Activated CD4-positive, alpha-beta T cell treated with anti-CD3 and anti-CD28 coated beads for 36 hours (primary cell): ENCODE measurements at regions of chr11 and their contacts with region 1.

Region 1: DNA sequence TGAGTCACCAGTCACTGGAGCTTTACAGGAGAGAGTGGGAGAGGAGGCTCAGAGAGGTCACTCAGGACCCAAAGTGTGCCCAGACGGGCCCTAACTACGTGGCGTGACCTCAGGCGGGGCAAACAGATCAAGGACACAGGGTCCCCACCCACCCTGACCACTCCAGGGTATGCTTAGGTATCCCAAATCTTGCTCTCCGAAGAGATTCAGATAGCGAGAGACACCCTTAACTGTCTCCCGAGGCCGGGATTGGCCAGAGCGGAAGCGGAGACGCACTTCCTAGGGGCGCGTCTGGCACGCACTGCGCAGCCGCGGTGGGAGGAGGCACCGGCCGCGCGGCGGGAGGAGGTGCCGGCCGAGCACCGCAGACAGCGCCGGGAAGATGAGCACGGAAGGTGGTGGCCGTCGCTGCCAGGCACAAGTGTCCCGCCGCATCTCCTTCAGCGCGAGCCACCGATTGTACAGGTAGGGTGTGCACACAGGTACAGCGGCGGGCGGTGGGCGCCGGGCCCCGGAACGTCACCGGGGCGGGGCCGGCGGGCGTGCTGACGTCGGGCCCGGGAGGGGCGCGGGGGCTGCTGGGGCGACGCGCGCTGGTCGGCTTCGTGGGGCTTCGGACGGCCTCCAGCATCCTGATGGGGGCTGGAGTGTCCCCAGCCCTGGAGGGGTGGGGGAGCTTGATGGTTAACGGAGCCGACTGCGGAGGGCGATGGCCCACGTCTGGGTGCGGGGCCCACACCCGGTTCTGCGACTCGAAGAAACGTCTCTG is at the start of gene PTS:
- DNase-seq: peak; percentile 90
- ATAC-seq: peak; percentile 97
- H3K4me3 Mint-ChIP-seq: peak within 1 kb of the TSS; percentile 78
- H3K27ac Mint-ChIP-seq: peak within 1 kb of the TSS; percentile 94
- H3K4me1 Mint-ChIP-seq: peaks cover 19% of the 10 kb centered on the region
- H3K27me3 Mint-ChIP-seq: no peaks in the 10 kb centered on the region
- total RNA-seq, gene PTS: 17.4 to 23.8 TPM

Region 2: DNA sequence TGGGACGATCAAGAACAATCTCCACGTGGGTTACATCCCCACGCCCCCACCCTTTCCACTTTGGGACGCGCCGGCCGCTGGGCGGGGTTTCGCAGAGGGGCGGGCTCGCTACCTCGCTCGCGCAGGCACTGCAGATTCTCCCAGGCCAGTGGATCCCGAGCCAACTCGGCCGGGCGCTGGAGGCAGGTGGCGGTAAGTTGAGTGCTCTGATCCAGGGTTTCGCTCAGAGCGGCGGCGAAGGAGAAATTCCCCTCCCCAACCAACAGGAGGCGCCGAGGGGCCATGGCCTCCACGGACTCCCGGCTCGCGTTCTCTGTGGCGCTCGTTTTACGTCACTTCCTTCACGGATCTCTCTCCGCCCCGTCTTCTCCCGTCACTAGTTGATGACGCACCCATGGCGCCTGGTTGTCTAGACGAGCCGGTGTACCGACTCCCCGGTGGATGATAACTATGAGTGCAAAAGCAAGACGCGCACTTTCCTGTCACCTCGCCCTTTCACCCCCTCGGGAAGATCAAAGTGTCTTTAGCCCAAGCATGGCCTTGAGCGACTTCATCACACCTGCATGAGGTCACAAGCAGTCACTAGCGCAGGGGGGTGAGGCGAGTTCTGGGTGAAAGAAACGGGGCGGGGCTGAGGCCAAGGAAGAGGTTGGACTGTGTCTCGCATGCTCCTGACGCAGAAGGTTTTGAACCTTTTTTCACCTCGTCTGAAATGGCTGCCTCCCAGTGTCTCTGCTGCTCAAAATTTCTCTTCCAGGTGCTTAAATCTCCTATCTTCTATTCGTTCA is 347.2 kb before region 1 on chr11 and contains the starts of genes CFAP68 and FDXACB1:
- CTCF ChIA-PET with region 1: interaction called, 3 read pairs
- POLR2A ChIA-PET with region 1: no interaction called
- intact Hi-C with region 1: loop called in 1 of 2 experiments (anchors 1 kb)
- DNase-seq: peak; percentile 97
- ATAC-seq: peak; percentile 92
- H3K4me3 Mint-ChIP-seq: peak within 1 kb of the TSS; percentile 78
- H3K27ac Mint-ChIP-seq: peak within 1 kb of the TSS; percentile 96
- H3K4me1 Mint-ChIP-seq: peaks cover 26% of the 10 kb centered on the region
- H3K27me3 Mint-ChIP-seq: no peaks in the 10 kb centered on the region
- total RNA-seq, gene CFAP68: 32.1 to 49.7 TPM
- total RNA-seq, gene FDXACB1: 5.9 to 6.0 TPM

Region 3: DNA sequence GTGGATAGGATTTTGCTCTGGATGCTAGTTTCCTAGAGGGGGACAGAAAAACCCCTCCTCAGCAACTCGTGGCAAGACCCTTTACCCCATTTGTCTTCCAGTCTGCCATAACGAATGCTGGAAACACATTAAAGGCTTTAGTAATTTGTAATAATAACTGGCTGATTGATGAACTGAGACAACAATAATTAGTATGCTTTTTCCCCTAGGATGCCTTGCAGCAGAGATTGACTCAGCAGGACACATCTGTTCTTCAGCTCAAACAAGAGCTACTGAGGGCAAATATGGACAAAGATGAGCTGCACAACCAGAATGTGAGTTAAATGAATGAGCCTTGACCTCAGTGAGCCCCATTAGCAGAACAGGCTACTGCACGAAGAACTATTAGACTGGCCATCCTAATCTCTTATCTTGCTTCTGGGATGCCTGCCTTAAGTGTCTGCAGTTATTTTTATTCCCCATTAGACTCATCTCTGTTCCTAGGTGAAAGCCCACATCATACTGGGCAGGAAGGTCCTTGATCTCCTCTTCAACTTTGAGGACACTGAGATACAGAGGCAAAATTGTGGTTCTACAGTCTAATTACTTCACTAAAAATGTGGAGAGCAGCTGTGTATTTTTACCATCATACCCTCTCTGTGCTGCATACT is 233.9 kb before region 1 on chr11:
- CTCF ChIA-PET with region 1: no interaction called
- POLR2A ChIA-PET with region 1: no interaction called
- intact Hi-C with region 1: no loop called
- DNase-seq: no peak
- ATAC-seq: no peak
- H3K4me3 Mint-ChIP-seq: no peak overlapping the region
- H3K27ac Mint-ChIP-seq: no peak overlapping the region
- H3K4me1 Mint-ChIP-seq: no peaks in the 10 kb centered on the region
- H3K27me3 Mint-ChIP-seq: no peaks in the 10 kb centered on the region

Region 4: GRCh38 chr11:112074026-112074811 is 152.0 kb before region 1 on chr11 and contains the start of gene NKAPD1:
- CTCF ChIA-PET with region 1: no interaction called
- POLR2A ChIA-PET with region 1: no interaction called
- intact Hi-C with region 1: loop called in 1 of 2 experiments (anchors 5 kb)
- DNase-seq: peak; percentile 86
- ATAC-seq: peak; percentile 92
- H3K4me3 Mint-ChIP-seq: peak within 1 kb of the TSS; percentile 94
- H3K27ac Mint-ChIP-seq: peak within 1 kb of the TSS; percentile 93
- H3K4me1 Mint-ChIP-seq: peaks cover 26% of the 10 kb centered on the region
- H3K27me3 Mint-ChIP-seq: peaks cover 11% of the 10 kb centered on the region
- total RNA-seq, gene NKAPD1: 23.7 to 45.3 TPM

Region 5: GRCh38 chr11:112280268-112281126 is 54.3 kb after region 1 on chr11:
- CTCF ChIA-PET with region 1: interaction called, 191 read pairs
- POLR2A ChIA-PET with region 1: interaction called, 4 read pairs
- intact Hi-C with region 1: no loop called
- DNase-seq: peak; percentile 77
- ATAC-seq: peak; percentile 92
- H3K4me3 Mint-ChIP-seq: peak overlapping the region; percentile 82
- H3K27ac Mint-ChIP-seq: peak overlapping the region; percentile 76
- H3K4me1 Mint-ChIP-seq: peaks cover 14% of the 10 kb centered on the region
- H3K27me3 Mint-ChIP-seq: no peaks in the 10 kb centered on the region

Region 6: DNA sequence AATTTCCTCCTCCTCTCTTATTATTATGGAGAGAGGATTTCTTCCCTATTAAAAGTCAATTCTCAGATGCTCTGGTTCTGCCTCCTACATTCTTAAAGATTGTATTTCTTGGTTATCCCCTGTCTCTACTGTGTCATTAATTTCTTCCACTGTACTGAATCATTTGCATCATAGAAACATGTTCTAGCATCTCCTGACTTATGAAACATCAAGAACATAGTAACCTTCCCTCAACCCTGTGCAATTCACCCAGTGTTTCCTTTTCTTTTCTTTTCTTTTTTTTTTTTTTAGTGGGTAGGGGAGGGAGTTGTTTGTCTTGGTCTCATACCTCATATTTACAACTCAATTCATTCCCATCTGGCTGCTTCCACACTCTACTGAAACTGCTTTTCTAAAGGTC is 322.4 kb after region 1 on chr11:
- CTCF ChIA-PET with region 1: no interaction called
- POLR2A ChIA-PET with region 1: no interaction called
- intact Hi-C with region 1: no loop called
- DNase-seq: no peak
- ATAC-seq: no peak
- H3K4me3 Mint-ChIP-seq: no peak overlapping the region
- H3K27ac Mint-ChIP-seq: no peak overlapping the region
- H3K4me1 Mint-ChIP-seq: no peaks in the 10 kb centered on the region
- H3K27me3 Mint-ChIP-seq: no peaks in the 10 kb centered on the region

Region 7: GRCh38 chr11:113314389-113315301 is 1088.4 kb after region 1 on chr11 and contains the start of gene TTC12:
- CTCF ChIA-PET with region 1: no interaction called
- POLR2A ChIA-PET with region 1: no interaction called
- intact Hi-C with region 1: loop called in 1 of 2 experiments (anchors 1 kb)
- DNase-seq: peak; percentile 97
- ATAC-seq: peak; percentile 99
- H3K4me3 Mint-ChIP-seq: peak within 1 kb of the TSS; percentile 77
- H3K27ac Mint-ChIP-seq: peak within 1 kb of the TSS; percentile 82
- H3K4me1 Mint-ChIP-seq: peaks cover 24% of the 10 kb centered on the region
- H3K27me3 Mint-ChIP-seq: no peaks in the 10 kb centered on the region
- total RNA-seq, gene TTC12: 16.3 to 17.6 TPM

Region 8: DNA sequence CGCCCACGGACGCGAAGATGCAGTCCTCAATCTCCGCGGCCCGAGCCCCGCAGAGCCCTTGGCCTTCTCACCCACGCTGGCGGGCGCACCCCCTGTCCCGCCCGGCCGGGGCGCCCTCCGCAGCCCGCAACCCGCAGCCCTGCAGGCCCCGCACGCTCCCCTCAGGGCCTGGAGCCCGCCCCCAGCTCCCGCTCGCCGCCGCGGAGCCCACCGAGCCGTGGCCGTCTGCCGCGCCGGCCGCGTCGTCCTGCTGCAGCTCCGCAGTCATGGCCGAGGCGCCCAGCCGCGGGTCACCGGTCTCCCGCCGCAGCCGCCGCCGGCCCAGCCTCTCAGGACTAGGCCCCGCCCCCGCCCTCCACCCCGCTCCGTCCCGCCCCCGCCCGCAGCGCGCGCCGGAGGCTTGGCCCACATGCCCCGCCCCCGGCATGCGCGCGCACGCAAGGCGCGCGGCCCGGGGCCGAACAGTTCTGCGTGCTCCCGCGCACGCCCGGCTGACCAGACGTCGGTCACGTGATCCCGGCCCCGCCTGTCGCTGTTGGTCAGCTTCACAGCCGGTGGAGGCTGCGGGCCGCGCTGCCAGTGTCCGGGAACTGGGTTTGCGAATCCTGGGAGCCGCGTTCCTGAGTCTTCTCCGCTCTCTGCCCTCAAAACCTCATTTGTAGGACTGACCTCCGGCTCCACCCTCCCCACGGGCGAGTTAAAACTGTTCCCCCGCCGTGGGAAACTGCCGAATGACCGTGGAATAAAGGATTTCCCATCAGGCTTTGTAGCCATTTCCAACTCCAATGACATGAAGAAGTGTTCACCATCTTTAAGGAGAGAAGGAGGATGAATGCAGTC is 1649.2 kb after region 1 on chr11 and contains the start of gene USP28:
- CTCF ChIA-PET with region 1: no interaction called
- POLR2A ChIA-PET with region 1: no interaction called
- intact Hi-C with region 1: loop called in 1 of 2 experiments (anchors 2 kb)
- DNase-seq: peak; percentile 89
- ATAC-seq: peak; percentile 80
- H3K4me3 Mint-ChIP-seq: peak within 1 kb of the TSS; percentile 90
- H3K27ac Mint-ChIP-seq: peak within 1 kb of the TSS; percentile 92
- H3K4me1 Mint-ChIP-seq: peaks cover 45% of the 10 kb centered on the region
- H3K27me3 Mint-ChIP-seq: no peaks in the 10 kb centered on the region
- total RNA-seq, gene USP28: 38.6 to 43.9 TPM